ENCODE measurements at regions of chr17 and their contacts with region 1.

Region 1: GRCh38 chr17:5592382-5592781 is 8.1 kb upstream of the NLRP1 start:
- DNase-seq: no peak
- H3K4me3 ChIP-seq: no peak overlapping the region
- H3K27ac ChIP-seq: no peak overlapping the region
- H3K4me1 ChIP-seq: no peaks in the 10 kb centered on the region
- H3K27me3 ChIP-seq: no peaks in the 10 kb centered on the region
- CTCF ChIP-seq: peak in 1 of 3 donors; percentile 22
- EP300 ChIP-seq: no peak
- POLR2A ChIP-seq: no peak

Region 2: DNA sequence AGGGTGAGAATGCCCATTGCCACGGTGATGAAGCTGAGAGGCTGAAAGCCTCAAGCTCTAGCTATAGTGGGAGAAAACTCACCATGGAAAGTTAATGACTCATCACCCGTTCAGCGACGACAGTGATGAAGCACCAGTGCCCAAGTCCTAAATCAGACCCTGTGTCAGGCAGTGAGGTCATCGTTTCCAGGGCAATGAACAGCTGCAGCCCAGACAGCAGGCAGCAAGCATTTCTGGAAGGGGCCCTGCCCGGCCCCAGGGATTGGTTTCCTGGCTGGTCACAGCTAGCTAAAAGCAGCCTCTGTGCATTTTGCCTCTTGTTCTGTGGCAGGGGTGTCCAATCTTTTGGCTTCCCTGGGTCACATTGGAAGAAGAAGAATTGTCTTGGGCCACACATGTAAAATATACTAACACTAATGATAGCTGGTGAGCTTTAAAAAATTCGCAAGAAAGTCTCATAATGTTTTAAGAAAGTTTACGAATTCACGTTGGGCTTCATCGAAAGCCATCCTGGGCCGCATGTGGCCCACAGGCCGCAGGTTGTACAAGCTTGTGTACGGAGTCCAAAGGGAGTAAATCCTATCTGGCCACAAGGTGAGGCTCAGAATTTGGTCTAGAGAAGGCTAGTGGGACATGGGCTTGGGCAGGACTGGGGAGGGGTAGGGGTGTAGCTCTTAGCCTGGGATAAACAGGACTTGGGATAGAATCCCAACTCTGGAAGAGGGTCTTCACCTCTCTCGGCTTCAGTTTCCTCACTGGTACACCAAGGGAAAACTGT is 65.4 kb before region 1 on chr17:
- intact Hi-C with region 1: no loop called
- DNase-seq: no peak
- H3K4me3 ChIP-seq: no peak overlapping the region
- H3K27ac ChIP-seq: no peak overlapping the region
- H3K4me1 ChIP-seq: no peaks in the 10 kb centered on the region
- H3K27me3 ChIP-seq: no peaks in the 10 kb centered on the region
- CTCF ChIP-seq: no peak
- EP300 ChIP-seq: no peak
- POLR2A ChIP-seq: no peak

Region 3: GRCh38 chr17:5667871-5668270 is 75.5 kb after region 1 on chr17:
- intact Hi-C with region 1: loop called in 1 of 4 experiments (anchors 2 kb)
- DNase-seq: no peak
- H3K4me3 ChIP-seq: no peak overlapping the region
- H3K27ac ChIP-seq: no peak overlapping the region
- H3K4me1 ChIP-seq: peaks cover 2% of the 10 kb centered on the region
- H3K27me3 ChIP-seq: no peaks in the 10 kb centered on the region
- CTCF ChIP-seq: no peak
- EP300 ChIP-seq: no peak
- POLR2A ChIP-seq: no peak

Region 4: GRCh38 chr17:6421700-6422604 is 829.6 kb after region 1 on chr17:
- intact Hi-C with region 1: loop called (anchors 2 to 5 kb)
- DNase-seq: peak; percentile 50 to 81 (median 78)
- H3K4me3 ChIP-seq: no peak overlapping the region
- H3K27ac ChIP-seq: no peak overlapping the region
- H3K4me1 ChIP-seq: no peaks in the 10 kb centered on the region
- H3K27me3 ChIP-seq: no peaks in the 10 kb centered on the region
- CTCF ChIP-seq: peak; percentile 58 to 71 (median 61)
- EP300 ChIP-seq: no peak
- POLR2A ChIP-seq: no peak

Measured in ovary (tissue), 10 donors.